HCT116 (cell line): ENCODE measurements at regions of chr20 and their contacts with region 1.

Region 1: DNA sequence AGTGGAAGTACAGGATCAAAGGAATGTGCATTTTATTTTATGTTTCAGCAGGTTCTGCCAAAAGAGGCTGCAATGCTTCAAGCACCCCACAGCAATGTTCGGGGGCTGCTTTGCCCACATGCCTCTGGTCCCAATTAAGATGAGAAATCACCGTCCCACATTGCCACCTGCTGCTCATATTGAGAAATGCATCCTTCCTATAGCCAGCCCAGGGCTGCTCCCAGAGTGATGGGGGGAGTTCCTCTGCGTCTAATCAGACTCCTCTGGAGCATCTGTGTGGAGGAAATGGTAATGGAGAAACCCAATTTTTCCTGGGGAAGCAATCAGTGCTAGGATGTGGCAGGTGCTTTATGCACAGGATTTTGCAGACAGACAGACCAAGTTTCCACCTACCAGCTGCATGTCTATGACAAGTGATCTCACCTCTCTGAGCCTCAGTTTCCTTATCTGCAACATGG is 33.7 kb downstream of the PTGIS start:
- DNase-seq: peak; percentile 48
- ATAC-seq: peak; percentile 92
- H3K4me3 ChIP-seq: no peak overlapping the region
- H3K27ac ChIP-seq: no peak overlapping the region
- H3K4me1 ChIP-seq: no peaks in the 10 kb centered on the region; a peak in 1 of 4 replicates
- H3K27me3 ChIP-seq: peaks cover 3% of the 10 kb centered on the region; the same call in 1 of the 2 replicates
- CTCF ChIP-seq: peak; percentile 82 to 95 (median 84)
- POLR2A ChIP-seq: no peak
- RAD21 ChIP-seq: peak; percentile 81

Region 2: DNA sequence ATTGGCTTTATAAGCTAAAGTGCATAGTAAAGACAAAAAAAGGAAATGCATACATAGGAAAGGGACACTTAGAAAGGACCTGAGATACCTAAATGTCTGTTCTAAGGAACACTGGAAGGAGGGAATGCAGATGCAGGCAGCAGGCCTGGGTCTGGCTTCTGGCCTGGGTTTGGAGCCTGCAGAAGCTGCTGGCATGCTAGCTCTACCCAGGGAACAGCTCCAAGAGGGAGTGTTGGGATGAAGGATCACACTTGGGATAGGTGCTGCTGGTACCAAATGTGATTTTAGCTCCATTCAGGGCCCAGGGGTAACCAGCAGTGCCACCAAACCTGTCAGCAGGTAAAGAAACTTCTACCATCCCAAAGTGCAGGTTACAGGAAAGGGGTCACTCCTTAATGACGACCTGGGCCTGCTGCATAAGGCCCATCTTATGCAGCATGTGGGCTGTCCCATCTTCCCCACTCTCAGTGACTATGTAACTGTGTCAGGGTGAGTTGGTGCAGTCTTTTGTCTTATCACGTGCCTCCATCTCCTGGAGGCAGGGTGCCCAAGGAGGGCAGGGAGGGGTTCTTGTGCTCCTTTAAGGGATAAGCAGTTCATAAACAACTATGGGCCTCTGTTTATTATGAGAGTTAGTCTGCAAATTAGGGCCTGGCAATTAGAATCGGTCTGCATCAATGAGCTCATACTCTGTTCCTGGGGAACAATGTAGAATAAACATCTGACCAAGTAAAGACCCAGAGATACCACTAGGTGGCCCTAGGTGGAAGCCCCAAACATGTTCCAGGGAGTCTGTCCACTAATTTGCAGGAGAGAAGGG is 288.2 kb before region 1 on chr20:
- CTCF ChIA-PET with region 1: no interaction called
- POLR2A ChIA-PET with region 1: no interaction called
- RAD21 ChIA-PET with region 1: no interaction called
- intact Hi-C with region 1: loop called (anchors 5 kb)
- DNase-seq: peak; percentile 23
- ATAC-seq: peak; percentile 88
- H3K4me3 ChIP-seq: no peak overlapping the region
- H3K27ac ChIP-seq: no peak overlapping the region
- H3K4me1 ChIP-seq: no peaks in the 10 kb centered on the region
- H3K27me3 ChIP-seq: no peaks in the 10 kb centered on the region
- CTCF ChIP-seq: peak; percentile 53 to 77 (median 77); a peak in 5 of 6 replicates
- POLR2A ChIP-seq: no peak
- RAD21 ChIP-seq: peak; percentile 65

Region 3: GRCh38 chr20:49562311-49563014 is 28.2 kb after region 1 on chr20:
- CTCF ChIA-PET with region 1: no interaction called
- POLR2A ChIA-PET with region 1: no interaction called
- RAD21 ChIA-PET with region 1: no interaction called
- intact Hi-C with region 1: no loop called
- DNase-seq: peak; percentile 23
- ATAC-seq: peak; percentile 92
- H3K4me3 ChIP-seq: peak overlapping the region in 1 of 2 experiments; percentile 19; a peak in 1 of 4 replicates
- H3K27ac ChIP-seq: peak overlapping the region; percentile 9
- H3K4me1 ChIP-seq: peaks cover 25 to 35% of the 10 kb centered on the region in 2 experiments
- H3K27me3 ChIP-seq: no peaks in the 10 kb centered on the region
- CTCF ChIP-seq: no peak
- POLR2A ChIP-seq: no peak
- RAD21 ChIP-seq: no peak